ENCODE measurements at regions of chr22 and their contacts with region 1.

Region 1: GRCh38 chr22:25453557-25453956 is 110.9 kb upstream of the GRK3 start:
- DNase-seq: no peak

Region 2: DNA sequence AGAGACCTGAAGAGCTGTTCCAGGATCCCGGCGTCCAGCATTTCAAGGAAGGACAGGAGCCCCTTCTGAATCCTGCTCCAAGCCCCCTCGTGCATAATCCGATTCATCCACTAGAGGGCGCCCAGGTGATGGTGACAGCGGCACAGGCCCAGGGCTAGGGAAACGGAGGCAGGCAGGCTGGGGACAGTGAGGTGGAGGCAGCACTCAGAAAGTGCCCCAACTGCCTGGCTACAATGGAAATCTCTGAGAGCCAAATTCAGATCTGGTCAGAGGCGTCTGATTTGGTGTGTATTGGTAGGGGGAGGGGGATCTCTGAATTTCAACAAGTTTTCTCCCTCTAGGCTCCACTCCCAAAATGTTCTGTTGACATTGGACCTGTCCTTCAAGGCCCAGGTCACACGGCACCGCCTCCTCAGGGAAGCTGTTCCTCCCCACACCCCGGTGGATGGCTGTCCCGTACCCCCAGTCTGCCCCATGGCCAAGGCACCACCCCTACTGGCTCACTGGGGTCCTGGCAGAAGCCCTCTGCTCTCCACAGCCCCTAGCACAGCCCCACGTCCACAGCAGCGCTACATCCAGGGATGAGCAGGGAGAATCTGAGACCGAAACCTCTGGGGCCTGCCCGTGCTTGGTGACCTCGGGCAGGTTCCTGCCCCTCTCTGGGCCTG is 91.2 kb before region 1 on chr22:
- intact Hi-C with region 1: loop called in 1 of 2 experiments (anchors 1 kb)
- DNase-seq: peak; percentile 87

Measured in posterior vena cava (tissue), 2 donors.